Left lung (tissue), 14 donors: ENCODE measurements at regions of chr11 and their contacts with region 1.

Region 1: GRCh38 chr11:93225662-93226061 is 27.9 kb upstream of the SLC36A4 start:
- DNase-seq: peak in 2 of 4 donors; percentile 56 to 65
- ATAC-seq: peak; percentile 47
- H3K4me3 ChIP-seq: no peak overlapping the region
- H3K27ac ChIP-seq: no peak overlapping the region
- H3K4me1 ChIP-seq: no peaks in the 10 kb centered on the region
- H3K27me3 ChIP-seq: no peaks in the 10 kb centered on the region
- CTCF ChIP-seq: no peak

Region 2: DNA sequence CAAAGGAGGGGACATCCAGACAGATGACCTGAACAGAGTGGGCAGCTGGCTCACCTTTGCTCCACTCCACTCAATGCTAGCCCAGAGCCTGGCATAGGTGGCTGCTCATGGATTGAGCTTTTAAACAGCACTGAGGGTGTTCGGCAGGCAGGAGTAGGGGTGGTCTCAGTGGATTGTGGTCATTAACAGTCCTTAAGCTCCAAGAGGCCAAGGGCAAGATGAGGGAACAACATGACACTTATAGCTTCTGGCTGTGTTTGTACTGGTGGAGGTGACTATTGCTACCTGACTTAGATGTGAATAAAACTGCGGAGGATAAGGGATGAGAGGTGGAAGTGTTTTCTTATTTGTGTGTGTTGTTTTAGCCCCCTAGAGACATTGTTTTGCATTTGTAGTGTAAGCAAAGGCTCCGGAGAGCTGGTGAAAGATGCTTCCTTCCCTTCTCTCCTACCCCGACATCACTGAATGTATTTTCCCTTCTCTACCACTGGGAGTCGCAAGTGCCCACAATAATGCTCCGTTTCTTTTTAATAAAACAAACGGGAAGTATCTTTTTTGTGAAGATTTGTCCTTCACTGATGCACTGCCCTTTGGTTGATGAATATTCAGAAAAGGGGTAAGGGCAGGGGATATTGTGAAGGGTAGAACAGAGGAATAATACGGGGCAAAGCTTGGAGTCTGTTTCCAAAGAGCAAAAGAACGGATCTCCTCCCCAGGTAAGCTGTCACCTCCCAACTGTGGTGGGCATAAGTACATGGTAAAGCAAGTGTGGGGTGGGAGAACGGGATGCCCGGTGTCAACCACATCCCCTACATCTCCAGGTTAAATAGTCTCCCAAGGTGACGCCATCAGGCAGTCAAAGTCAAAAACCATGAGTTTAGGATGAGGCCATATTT is 283.7 kb before region 1 on chr11:
- intact Hi-C with region 1: loop called in 1 of 2 experiments (anchors 5 kb)
- DNase-seq: peak in 2 of 4 donors; percentile 12 to 46
- ATAC-seq: peak; percentile 71
- H3K4me3 ChIP-seq: no peak overlapping the region
- H3K27ac ChIP-seq: no peak overlapping the region
- H3K4me1 ChIP-seq: no peaks in the 10 kb centered on the region
- H3K27me3 ChIP-seq: no peaks in the 10 kb centered on the region
- CTCF ChIP-seq: peak; percentile 58 to 60

Region 3: GRCh38 chr11:93000511-93001476 is 224.9 kb before region 1 on chr11:
- intact Hi-C with region 1: no loop called
- DNase-seq: no peak
- ATAC-seq: no peak
- H3K4me3 ChIP-seq: no peak overlapping the region
- H3K27ac ChIP-seq: no peak overlapping the region
- H3K4me1 ChIP-seq: no peaks in the 10 kb centered on the region
- H3K27me3 ChIP-seq: no peaks in the 10 kb centered on the region
- CTCF ChIP-seq: no peak

Region 4: GRCh38 chr11:93330446-93330984 is 104.9 kb after region 1 on chr11 and contains the start of gene DEUP1:
- intact Hi-C with region 1: no loop called
- DNase-seq: peak; percentile 59 to 87 (median 76)
- ATAC-seq: peak; percentile 99
- H3K4me3 ChIP-seq: peak within 1 kb of the TSS; percentile 24 to 31
- H3K27ac ChIP-seq: no peak within 1 kb of the TSS
- H3K4me1 ChIP-seq: no peaks in the 10 kb centered on the region
- H3K27me3 ChIP-seq: peaks cover 6 to 29% of the 10 kb centered on the region in 2 donors
- CTCF ChIP-seq: no peak
- polyA plus RNA-seq, gene DEUP1: 1.7 to 3.8 (median 3.2) TPM